Psoas muscle (tissue), 8 donors: ENCODE measurements at regions of chr17 and their contacts with region 1.

Region 1: GRCh38 chr17:50547035-50547735 is at the start of gene SPATA20:
- DNase-seq: peak; percentile 91 to 94
- ATAC-seq: peak; percentile 82 to 90 (median 86)
- H3K4me3 ChIP-seq: peak within 1 kb of the TSS; percentile 85
- H3K27ac ChIP-seq: peak within 1 kb of the TSS; percentile 83
- H3K4me1 ChIP-seq: peaks cover 7% of the 10 kb centered on the region
- H3K27me3 ChIP-seq: no peaks in the 10 kb centered on the region
- CTCF ChIP-seq: peak; percentile 99
- total RNA-seq, gene SPATA20: 16.7 to 25.8 (median 21.9) TPM

Region 2: GRCh38 chr17:50626037-50626574 is 78.9 kb after region 1 on chr17:
- intact Hi-C with region 1: loop called (anchors 1 to 2 kb)
- DNase-seq: peak; percentile 80 to 87
- ATAC-seq: peak; percentile 80 to 90 (median 82)
- H3K4me3 ChIP-seq: no peak overlapping the region
- H3K27ac ChIP-seq: no peak overlapping the region
- H3K4me1 ChIP-seq: no peaks in the 10 kb centered on the region
- H3K27me3 ChIP-seq: peaks cover 0 to 26% (median 3%) of the 10 kb centered on the region in 3 donors
- CTCF ChIP-seq: peak; percentile 72

Region 3: DNA sequence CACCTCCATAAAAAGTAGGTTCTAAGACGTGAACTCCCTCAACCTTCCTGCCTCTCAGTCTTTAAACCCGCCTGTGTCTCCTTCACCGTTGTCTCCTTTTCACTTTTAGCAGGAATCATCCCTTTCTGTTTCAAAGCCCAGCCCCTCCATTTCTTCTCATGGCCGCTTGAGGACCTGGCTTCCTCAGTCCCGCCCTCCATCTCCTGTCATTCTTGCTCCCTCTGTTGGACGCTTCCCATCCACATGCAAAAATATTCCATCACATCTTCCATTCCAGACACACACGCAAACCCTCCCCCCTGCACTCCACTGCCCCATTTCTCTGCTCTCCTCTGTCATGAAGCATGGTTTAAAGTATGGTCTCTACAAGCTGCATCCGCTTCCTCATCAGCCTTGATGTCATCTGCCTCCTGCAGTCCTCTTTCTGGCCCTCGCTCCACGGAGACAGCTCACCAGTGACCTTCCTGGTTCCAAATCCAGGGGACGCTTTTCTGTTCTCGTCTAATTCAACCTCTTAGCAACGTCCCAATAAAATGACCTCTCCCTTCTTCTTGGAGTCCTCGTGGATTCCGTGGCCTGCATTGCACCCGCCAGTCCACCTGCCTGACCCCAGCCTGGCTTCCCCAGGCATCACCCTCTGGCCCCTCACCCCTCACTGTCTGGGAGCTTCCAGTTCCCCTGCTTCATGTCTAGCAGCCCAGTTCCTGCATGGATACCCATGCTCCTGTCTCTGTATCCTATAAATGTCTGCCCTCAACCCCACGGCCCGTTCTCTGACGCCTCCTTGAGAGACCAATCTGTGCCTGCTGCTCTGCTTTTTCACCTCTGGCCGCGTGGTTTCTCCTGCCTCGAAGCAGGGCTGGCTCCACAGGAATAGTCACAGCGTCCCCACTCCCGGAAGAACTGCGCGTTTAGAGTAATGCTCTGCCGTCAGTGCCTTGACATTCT is 134.4 kb after region 1 on chr17:
- intact Hi-C with region 1: loop called in 1 of 2 experiments (anchors 5 kb)
- DNase-seq: no peak
- ATAC-seq: peak in 3 of 4 donors; percentile 17 to 51 (median 32)
- H3K4me3 ChIP-seq: no peak overlapping the region
- H3K27ac ChIP-seq: no peak overlapping the region
- H3K4me1 ChIP-seq: peaks cover 8% of the 10 kb centered on the region
- H3K27me3 ChIP-seq: no peaks in the 10 kb centered on the region
- CTCF ChIP-seq: peak; percentile 21

Region 4: GRCh38 chr17:50697663-50698274 is 150.6 kb after region 1 on chr17:
- intact Hi-C with region 1: loop called (anchors 5 kb)
- DNase-seq: no peak
- ATAC-seq: peak in 1 of 4 donors; percentile 32
- H3K4me3 ChIP-seq: no peak overlapping the region
- H3K27ac ChIP-seq: no peak overlapping the region
- H3K4me1 ChIP-seq: peaks cover 31% of the 10 kb centered on the region
- H3K27me3 ChIP-seq: no peaks in the 10 kb centered on the region
- CTCF ChIP-seq: no peak

Region 5: GRCh38 chr17:50841949-50842354 is 294.8 kb after region 1 on chr17:
- intact Hi-C with region 1: loop called (anchors 2 to 5 kb)
- DNase-seq: peak; percentile 64 to 80
- ATAC-seq: peak; percentile 51 to 68 (median 58)
- H3K4me3 ChIP-seq: no peak overlapping the region
- H3K27ac ChIP-seq: no peak overlapping the region
- H3K4me1 ChIP-seq: peaks cover 26% of the 10 kb centered on the region
- H3K27me3 ChIP-seq: no peaks in the 10 kb centered on the region
- CTCF ChIP-seq: peak; percentile 83